Endothelial cell of umbilical vein (primary cell): ENCODE measurements at regions of chr2 and their contacts with region 1.

Region 1: GRCh38 chr2:112121682-112122254 is 16.4 kb upstream of the FBLN7 start:
- DNase-seq: peak; percentile 77
- H3K4me3 ChIP-seq: no peak overlapping the region
- H3K27ac ChIP-seq: no peak overlapping the region
- H3K4me1 ChIP-seq: no peaks in the 10 kb centered on the region
- H3K27me3 ChIP-seq: no peaks in the 10 kb centered on the region
- CTCF ChIP-seq: peak; percentile 30 to 49
- POLR2A ChIP-seq: no peak

Region 2: DNA sequence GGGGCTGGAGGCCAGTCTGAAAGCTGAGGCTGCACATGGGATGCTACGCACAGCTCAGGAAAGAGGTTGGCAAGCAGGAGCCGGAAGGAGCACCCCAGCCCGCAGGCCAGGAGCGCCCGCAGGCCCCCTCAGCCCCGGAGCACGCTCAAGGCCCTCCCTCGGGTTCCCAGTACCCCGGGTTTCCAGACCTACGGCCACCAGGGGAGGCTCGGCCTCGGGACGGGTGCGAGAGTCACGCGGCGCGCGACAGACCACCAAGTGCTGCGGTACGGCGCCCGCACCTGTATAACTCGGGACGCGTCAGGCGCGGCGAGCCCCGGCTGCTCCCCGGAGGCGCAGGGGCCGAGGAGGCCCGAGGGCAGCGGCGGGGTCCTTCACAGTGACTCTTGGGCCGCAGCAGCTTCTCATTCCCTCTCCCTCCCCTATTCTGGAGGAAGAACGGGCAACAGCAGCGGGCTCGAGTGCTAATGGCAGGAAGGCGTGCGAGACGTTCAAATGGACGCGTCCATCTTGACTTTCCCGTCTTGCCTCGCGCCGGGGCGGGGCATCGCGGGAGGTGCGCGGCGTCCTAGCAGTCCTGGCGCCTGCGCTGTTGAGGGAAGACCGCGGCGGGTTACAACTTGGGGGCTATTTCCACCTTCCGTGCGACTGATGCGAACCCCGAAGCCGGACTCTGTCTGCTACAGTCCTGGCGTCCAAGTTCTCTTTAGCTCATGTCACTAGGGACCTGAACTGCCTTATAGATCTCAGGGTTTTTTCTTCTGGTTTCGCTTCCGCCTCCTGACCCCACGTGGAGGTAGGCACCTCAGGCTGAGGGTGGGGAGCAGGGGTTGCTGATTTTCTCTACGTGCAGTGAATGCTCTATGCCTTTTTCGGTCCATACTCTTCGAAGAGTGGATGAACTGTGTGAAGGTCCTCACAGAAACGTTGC is 237.8 kb before region 1 on chr2 and contains the start of gene ANAPC1:
- CTCF ChIA-PET with region 1: interaction called, 15 read pairs
- POLR2A ChIA-PET with region 1: no interaction called
- dilution Hi-C with region 1: no loop called
- intact Hi-C with region 1: loop called (anchors 2 kb)
- DNase-seq: peak; percentile 87
- H3K4me3 ChIP-seq: peak within 1 kb of the TSS; percentile 90 to 97 (median 96)
- H3K27ac ChIP-seq: peak within 1 kb of the TSS; percentile 66
- H3K4me1 ChIP-seq: peaks cover 7% of the 10 kb centered on the region
- H3K27me3 ChIP-seq: no peaks in the 10 kb centered on the region
- CTCF ChIP-seq: no peak
- POLR2A ChIP-seq: peak; percentile 96
- total RNA-seq, gene ANAPC1: 58.3 and 61.5 TPM in 2 replicates

Region 3: DNA sequence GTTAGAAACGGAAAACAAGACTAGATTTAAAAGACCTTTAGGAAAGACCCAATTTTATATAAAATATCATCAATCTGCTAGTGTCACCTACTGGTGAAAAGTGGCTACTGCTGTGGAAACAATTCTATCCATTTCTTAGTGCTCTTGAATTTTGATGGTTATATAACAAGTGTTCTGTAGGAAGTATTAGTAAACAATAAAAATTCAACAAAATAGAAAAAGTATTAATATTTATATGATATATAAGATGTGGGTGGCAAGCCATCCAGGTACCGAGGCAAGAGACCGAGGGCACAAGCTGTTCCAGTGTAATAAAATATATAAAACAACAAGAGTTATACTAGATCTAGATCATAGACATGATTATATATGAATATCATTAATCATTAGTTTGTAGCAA is 72.9 kb before region 1 on chr2:
- CTCF ChIA-PET with region 1: interaction called, 10 read pairs
- POLR2A ChIA-PET with region 1: no interaction called
- dilution Hi-C with region 1: no loop called
- intact Hi-C with region 1: no loop called
- DNase-seq: peak; percentile 84
- H3K4me3 ChIP-seq: no peak overlapping the region
- H3K27ac ChIP-seq: no peak overlapping the region
- H3K4me1 ChIP-seq: peaks cover 5% of the 10 kb centered on the region
- H3K27me3 ChIP-seq: peaks cover 0 to 1% of the 10 kb centered on the region in 2 experiments
- CTCF ChIP-seq: peak; percentile 48 to 69
- POLR2A ChIP-seq: no peak

Region 4: DNA sequence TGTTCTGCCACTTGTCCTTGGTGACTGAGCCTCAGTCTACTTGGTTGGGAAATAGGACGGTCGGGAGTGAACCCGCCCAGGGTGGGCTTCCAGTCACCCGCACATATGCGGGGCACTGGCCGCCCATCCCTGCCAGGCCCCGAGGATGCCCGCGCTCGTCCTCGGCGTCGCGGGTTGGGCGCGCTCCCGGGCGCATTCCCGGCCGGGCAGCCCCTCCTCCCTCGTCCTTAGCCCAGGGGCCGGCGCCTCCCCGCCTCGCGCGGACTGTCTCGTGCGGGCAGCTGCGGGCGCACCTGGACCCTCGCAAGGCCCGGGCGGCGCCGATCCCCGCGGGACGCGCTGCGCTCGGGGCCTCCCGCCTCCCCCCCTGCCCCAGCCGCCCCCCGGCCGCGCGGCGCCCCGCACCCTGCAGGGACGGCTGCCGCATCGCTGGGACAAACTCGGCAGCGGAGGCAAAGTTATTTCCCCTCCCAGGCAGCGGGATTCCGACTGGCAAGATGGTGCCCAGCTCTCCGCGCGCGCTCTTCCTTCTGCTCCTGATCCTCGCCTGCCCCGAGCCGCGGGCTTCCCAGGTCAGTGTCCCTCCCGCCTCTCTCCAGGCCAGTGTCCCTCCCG is 16.5 kb after region 1 on chr2 and contains the start of gene FBLN7:
- CTCF ChIA-PET with region 1: interaction called, 13 read pairs
- POLR2A ChIA-PET with region 1: no interaction called
- dilution Hi-C with region 1: no loop called
- intact Hi-C with region 1: no loop called
- DNase-seq: no peak
- H3K4me3 ChIP-seq: peak within 1 kb of the TSS; percentile 32 to 56 (median 55)
- H3K27ac ChIP-seq: peak within 1 kb of the TSS; percentile 1
- H3K4me1 ChIP-seq: peaks cover 9% of the 10 kb centered on the region
- H3K27me3 ChIP-seq: no peaks in the 10 kb centered on the region
- CTCF ChIP-seq: no peak
- POLR2A ChIP-seq: no peak
- total RNA-seq, gene FBLN7: 2.1 and 3.3 TPM in 2 replicates

Region 5: DNA sequence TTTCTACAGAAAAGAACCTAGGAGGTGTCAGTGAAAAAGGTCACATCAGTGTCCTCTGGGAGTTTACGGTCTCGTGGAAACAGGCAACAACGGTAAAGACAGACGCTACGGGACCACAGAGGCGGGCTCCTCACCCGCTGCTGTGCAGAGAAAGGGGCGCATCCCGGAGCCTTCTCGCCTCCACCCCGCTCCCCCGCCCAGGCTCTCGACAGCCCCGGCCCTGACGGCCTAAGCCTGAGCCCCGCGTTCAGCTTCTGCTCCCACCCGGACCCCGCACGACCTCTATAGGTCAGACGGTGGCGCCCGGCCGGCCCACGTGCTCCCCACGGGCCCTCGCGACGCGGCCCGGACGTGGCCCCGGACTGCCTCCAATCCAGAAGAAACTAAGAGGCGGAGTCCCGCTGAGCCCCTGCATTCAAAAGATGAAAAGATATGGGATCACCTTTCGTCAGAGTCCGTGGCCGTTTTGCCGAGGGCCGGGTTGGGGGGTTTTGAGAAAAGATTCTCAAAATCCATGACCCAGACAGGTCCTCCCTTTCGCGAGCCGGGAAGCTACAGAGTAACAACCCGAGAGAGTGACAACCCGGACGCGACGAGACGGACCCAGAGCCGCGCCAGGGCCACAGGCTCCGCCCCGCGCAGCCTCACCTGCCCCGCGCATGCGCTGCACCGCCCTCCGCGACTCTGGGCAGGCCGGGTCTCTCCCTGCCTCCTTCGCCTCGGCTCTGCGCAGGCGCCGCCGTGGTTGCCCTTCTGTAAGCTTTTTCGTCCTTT is 132.9 kb after region 1 on chr2 and contains the start of gene ZC3H8:
- CTCF ChIA-PET with region 1: interaction called, 26 read pairs
- POLR2A ChIA-PET with region 1: no interaction called
- dilution Hi-C with region 1: no loop called
- intact Hi-C with region 1: loop called (anchors 5 kb)
- DNase-seq: peak; percentile 89
- H3K4me3 ChIP-seq: peak within 1 kb of the TSS; percentile 49 to 89 (median 82)
- H3K27ac ChIP-seq: peak within 1 kb of the TSS; percentile 65
- H3K4me1 ChIP-seq: peaks cover 13% of the 10 kb centered on the region
- H3K27me3 ChIP-seq: no peaks in the 10 kb centered on the region
- CTCF ChIP-seq: no peak
- POLR2A ChIP-seq: peak; percentile 90
- total RNA-seq, gene ZC3H8: 7.1 and 7.8 TPM in 2 replicates

Region 6: GRCh38 chr2:112259509-112260294 is 137.9 kb after region 1 on chr2:
- CTCF ChIA-PET with region 1: interaction called, 26 read pairs
- POLR2A ChIA-PET with region 1: no interaction called
- dilution Hi-C with region 1: no loop called
- intact Hi-C with region 1: loop called (anchors 5 kb)
- DNase-seq: peak; percentile 83
- H3K4me3 ChIP-seq: no peak overlapping the region
- H3K27ac ChIP-seq: no peak overlapping the region
- H3K4me1 ChIP-seq: peaks cover 7% of the 10 kb centered on the region
- H3K27me3 ChIP-seq: no peaks in the 10 kb centered on the region
- CTCF ChIP-seq: peak; percentile 95 to 97
- POLR2A ChIP-seq: no peak

Region 7: GRCh38 chr2:112433932-112434730 is 312.4 kb after region 1 on chr2:
- CTCF ChIA-PET with region 1: interaction called, 33 read pairs
- POLR2A ChIA-PET with region 1: interaction called, 6 read pairs
- dilution Hi-C with region 1: no loop called
- intact Hi-C with region 1: loop called (anchors 2 kb)
- DNase-seq: no peak
- H3K4me3 ChIP-seq: no peak overlapping the region
- H3K27ac ChIP-seq: no peak overlapping the region
- H3K4me1 ChIP-seq: no peaks in the 10 kb centered on the region
- H3K27me3 ChIP-seq: no peaks in the 10 kb centered on the region
- CTCF ChIP-seq: no peak
- POLR2A ChIP-seq: no peak